Left cardiac atrium (tissue), 4 donors: ENCODE measurements at regions of chr17 and their contacts with region 1.

Region 1: DNA sequence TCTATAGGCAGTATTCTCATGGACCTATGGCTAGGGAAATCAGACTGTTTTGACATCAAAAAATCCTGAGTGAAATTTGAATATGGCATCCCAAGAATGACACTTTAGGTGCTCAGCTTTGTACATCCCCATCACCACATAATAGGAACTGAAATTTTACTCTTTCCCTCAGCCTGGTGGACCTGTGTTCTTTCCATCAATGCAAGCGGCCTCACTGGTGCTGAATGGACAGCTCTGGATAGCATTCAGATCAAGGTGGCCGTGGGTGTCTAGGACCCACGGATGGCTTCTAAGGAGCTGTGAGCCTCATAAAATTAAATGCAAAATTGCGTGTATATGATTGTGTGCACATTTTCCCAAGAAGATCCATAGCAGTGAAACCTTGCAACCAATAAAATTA is 152.6 kb downstream of the MAP2K6 start:
- DNase-seq: no peak
- ATAC-seq: no peak

Region 2: GRCh38 chr17:70622368-70623260 is 1055.5 kb after region 1 on chr17:
- intact Hi-C with region 1: loop called in 1 of 2 experiments (anchors 5 kb)
- DNase-seq: peak; percentile 40
- ATAC-seq: peak in 1 of 2 donors; percentile 37